ENCODE measurements at regions of chr3 and their contacts with region 1.

Region 1: DNA sequence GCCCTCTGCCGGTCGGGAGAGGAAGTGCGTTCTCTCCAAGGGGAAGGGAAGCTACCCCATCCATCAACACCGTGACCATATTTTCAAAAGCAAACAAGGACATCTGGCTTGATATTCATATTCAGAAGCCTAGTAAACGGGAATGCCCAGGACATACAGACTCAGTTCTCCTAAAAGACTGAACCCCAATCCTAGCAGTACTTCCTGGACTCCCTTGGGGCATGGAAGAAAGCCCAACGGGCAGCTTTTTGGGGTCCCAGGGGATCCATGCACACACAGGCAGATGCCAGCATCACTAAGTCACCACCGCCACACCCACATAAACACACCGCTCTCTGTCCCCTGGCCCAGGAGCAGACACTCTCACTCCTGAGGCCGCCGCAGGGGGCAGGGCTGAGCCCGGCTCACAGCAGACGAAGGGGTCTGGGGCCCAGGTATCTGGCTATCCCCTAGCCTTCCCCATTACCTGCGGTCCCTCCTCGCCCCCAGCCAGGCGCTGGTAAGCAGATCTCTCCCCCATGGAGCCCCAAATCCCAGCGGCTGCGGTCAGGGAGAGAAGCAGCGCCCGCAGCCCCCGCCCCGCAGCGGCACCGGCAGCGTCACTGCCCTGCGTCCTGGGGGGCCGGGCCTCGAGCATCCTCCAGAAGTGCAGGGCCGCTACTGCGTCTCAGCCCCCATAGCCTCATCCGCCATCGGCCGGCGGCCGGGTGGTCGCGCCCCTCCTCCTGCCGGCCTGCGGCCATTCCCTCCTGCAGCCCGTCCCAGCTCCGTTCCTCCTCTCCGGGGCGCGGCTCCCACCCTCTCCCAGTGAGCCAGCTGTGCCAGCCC is 13.4 kb downstream of the TNK2 start:
- DNase-seq: no peak
- H3K4me3 ChIP-seq: peak overlapping the region; percentile 52 to 69 (median 62)
- H3K27ac ChIP-seq: peak overlapping the region; percentile 85 to 94 (median 91)
- H3K4me1 ChIP-seq: peaks cover 44 to 96% (median 46%) of the 10 kb centered on the region in 3 donors
- H3K27me3 ChIP-seq: no peaks in the 10 kb centered on the region
- CTCF ChIP-seq: peak; percentile 93 to 98 (median 96)
- POLR2A ChIP-seq: no peak

Region 2: DNA sequence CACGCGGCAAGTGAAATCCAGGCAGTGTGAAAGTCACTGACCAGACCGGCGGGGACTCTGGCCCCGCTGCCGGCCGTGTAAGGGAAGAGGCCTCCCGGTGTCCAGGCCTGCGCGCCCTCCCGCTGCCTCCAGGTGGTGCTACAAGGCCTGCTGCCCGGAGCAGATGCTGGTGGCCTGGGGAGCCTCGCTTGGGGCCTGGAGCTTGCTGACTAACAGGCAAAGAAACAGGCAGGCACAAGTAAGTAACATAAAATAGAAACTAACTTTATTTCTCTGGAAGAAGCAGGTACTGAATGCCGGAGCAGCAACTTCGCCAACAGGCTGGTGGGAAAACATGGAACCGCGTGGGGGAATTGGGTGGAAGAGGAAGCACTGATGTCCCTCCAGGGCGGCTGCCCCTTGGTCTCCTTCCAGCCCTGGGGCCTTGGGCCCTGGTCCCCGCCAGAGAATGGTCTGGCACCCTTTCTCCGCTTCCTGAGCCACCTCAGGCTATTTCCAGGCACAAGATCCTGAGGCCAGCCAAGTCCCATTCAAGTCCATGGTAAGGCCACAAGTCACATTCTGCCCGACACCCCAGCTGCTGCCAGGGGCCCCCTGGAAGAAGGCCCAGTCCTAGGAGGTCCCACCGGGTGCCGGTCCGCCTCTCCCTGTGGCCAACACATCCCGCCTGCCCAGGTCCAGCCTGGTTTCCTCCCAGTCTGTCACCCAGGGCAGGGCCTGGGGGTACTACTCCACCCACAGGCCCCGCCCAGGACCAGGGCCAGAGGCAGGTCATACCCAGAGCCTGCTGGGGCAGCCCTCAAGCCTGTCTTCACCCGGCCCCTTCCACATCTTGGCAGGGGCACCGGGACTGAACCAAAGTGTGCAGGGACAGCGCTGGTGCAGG is 31.6 kb before region 1 on chr3:
- intact Hi-C with region 1: loop called (anchors 5 kb)
- DNase-seq: no peak
- H3K4me3 ChIP-seq: no peak overlapping the region
- H3K27ac ChIP-seq: peak overlapping the region; percentile 86 to 94 (median 91)
- H3K4me1 ChIP-seq: peaks cover 13 to 35% (median 18%) of the 10 kb centered on the region in 3 donors
- H3K27me3 ChIP-seq: no peaks in the 10 kb centered on the region
- CTCF ChIP-seq: peak; percentile 83 to 98 (median 96)
- POLR2A ChIP-seq: no peak

Measured in esophagus squamous epithelium (tissue), 5 donors.